Ascending aorta (tissue), 2 donors: ENCODE measurements at regions of chr11 and their contacts with region 1.

Region 1: GRCh38 chr11:112113539-112114457 is 27.1 kb downstream of the SDHD start:
- DNase-seq: no peak
- H3K4me3 ChIP-seq: peak overlapping the region in 1 of 2 donors; percentile 25
- H3K27ac ChIP-seq: no peak overlapping the region
- H3K4me1 ChIP-seq: peaks cover 0 to 4% of the 10 kb centered on the region in 2 donors
- H3K27me3 ChIP-seq: no peaks in the 10 kb centered on the region
- CTCF ChIP-seq: peak; percentile 56 to 66 (median 56)

Region 2: GRCh38 chr11:111788051-111788450 is 325.7 kb before region 1 on chr11:
- intact Hi-C with region 1: no loop called
- DNase-seq: no peak
- H3K4me3 ChIP-seq: no peak overlapping the region
- H3K27ac ChIP-seq: peak overlapping the region in 1 of 2 donors; percentile 24
- H3K4me1 ChIP-seq: no peaks in the 10 kb centered on the region
- H3K27me3 ChIP-seq: no peaks in the 10 kb centered on the region
- CTCF ChIP-seq: no peak

Region 3: GRCh38 chr11:111975076-111975806 is 138.6 kb before region 1 on chr11:
- intact Hi-C with region 1: no loop called
- DNase-seq: no peak
- H3K4me3 ChIP-seq: no peak overlapping the region
- H3K27ac ChIP-seq: peak overlapping the region; percentile 92 to 99
- H3K4me1 ChIP-seq: peaks cover 3 to 20% of the 10 kb centered on the region in 2 donors
- H3K27me3 ChIP-seq: no peaks in the 10 kb centered on the region
- CTCF ChIP-seq: peak in 2 of 3 experiments; percentile 26 to 36

Region 4: GRCh38 chr11:112174789-112175598 is 61.2 kb after region 1 on chr11 and contains the start of gene BCO2:
- intact Hi-C with region 1: loop called (anchors 1 kb)
- DNase-seq: peak; percentile 43 to 88
- H3K4me3 ChIP-seq: peak within 1 kb of the TSS; percentile 44 to 46
- H3K27ac ChIP-seq: peak within 1 kb of the TSS in 1 of 2 donors; percentile 31
- H3K4me1 ChIP-seq: peaks cover 0 to 3% of the 10 kb centered on the region in 2 donors
- H3K27me3 ChIP-seq: no peaks in the 10 kb centered on the region
- CTCF ChIP-seq: peak; percentile 63 to 83 (median 78)
- total RNA-seq, gene BCO2: not detected